Activated CD4-positive, alpha-beta T cell treated with anti-CD3 and anti-CD28 coated beads, Interleukin-2, amount 10 ng/mL, durations not matched to agents 24 days and 14 days (primary cell): ENCODE measurements at regions of chr13 and their contacts with region 1.

Region 1: DNA sequence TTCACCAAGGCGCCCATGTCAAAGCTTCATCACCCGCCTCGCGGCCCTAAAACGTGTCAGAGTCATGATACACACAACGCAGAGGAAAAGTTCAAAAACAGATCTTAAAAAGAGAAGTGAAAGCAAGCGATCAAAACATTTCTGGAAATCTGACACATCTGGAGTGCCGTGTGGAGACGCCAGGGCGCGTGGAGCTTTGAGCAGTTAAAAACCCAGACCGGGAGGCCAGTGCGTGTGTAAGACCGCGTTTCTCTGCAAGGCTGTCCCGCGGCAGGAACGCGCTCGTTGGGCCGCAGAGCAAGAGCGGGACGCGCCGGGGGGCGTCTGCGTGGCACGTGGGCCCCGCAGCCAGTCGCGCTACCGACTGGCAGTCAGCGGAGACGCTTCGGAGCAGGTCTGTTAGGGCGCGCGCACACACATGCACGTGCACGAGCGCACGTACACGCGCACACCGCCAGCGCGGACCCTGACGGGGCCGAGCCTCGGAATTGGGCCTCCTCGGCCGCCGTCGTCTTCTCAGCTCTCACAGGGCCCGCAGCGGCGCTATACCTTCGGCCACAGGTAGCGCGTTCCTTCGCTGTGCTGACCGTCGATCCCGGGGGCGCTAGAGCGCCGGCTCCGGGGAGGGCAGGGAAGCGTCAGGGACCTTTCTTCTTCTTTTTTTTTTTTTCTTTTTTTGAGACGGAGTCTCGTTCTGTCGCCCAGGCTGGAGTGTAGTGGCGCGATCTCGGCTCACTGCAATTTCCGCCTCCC is 35.8 kb downstream of the RNF6 start:
- DNase-seq: peak; percentile 97
- H3K4me3 Mint-ChIP-seq: peak overlapping the region; percentile 88
- H3K27ac Mint-ChIP-seq: peak overlapping the region; percentile 97
- H3K4me1 Mint-ChIP-seq: peaks cover 23% of the 10 kb centered on the region
- H3K27me3 Mint-ChIP-seq: no peaks in the 10 kb centered on the region

Region 2: DNA sequence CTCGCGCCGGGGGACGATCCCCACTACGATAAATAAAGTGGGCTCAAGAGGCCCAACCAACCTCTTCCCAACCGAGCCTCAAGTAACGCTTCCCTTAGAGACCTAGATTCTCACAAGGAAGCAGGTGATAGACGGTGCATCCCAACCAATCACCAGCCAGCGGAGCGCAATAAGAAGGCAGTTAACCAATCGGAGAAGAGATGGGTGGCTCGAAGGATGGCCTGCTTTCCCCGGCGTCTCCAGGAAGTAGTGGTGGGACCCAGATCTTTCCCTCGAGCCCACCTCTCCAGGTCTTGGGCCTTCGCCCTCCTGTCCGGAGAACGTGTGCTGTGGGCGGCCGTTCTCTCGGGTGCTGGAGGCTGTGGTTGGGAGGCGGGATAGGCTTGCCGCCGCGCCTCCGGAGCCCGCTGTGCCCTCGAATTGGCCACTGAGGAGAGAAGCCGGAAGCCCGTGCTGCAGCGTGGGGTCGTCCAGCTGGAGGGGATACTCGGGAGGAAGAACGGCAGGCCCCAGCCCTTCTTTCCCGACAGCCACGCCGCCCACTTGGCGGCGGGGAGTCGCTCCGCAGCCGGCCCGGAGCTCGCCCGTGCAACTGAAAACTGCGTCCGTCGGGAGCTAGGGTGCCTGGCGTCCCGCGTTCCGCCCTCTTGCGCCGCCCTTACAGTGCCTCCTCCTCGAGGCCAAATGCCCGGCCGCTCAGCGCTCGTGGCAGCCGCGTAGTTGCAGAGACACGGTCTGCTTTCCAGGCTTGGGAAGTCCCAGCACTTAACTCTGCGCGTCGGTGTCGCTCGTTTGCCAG is 35.6 kb after region 1 on chr13 and contains the start of gene RNF6:
- intact Hi-C with region 1: loop called (anchors 1 kb)
- DNase-seq: peak; percentile 95
- H3K4me3 Mint-ChIP-seq: peak within 1 kb of the TSS; percentile 97
- H3K27ac Mint-ChIP-seq: peak within 1 kb of the TSS; percentile 99
- H3K4me1 Mint-ChIP-seq: peaks cover 33% of the 10 kb centered on the region
- H3K27me3 Mint-ChIP-seq: peaks cover 2% of the 10 kb centered on the region
- total RNA-seq, gene RNF6: 45.8 and 53.4 TPM in 2 replicates

Region 3: GRCh38 chr13:26253787-26254582 is 67.7 kb after region 1 on chr13 and contains the start of gene CDK8:
- intact Hi-C with region 1: loop called (anchors 1 kb)
- DNase-seq: peak; percentile 96
- H3K4me3 Mint-ChIP-seq: peak within 1 kb of the TSS; percentile 85
- H3K27ac Mint-ChIP-seq: peak within 1 kb of the TSS; percentile 83
- H3K4me1 Mint-ChIP-seq: peaks cover 23% of the 10 kb centered on the region
- H3K27me3 Mint-ChIP-seq: no peaks in the 10 kb centered on the region
- total RNA-seq, gene CDK8: 18.6 and 20.0 TPM in 2 replicates

Region 4: DNA sequence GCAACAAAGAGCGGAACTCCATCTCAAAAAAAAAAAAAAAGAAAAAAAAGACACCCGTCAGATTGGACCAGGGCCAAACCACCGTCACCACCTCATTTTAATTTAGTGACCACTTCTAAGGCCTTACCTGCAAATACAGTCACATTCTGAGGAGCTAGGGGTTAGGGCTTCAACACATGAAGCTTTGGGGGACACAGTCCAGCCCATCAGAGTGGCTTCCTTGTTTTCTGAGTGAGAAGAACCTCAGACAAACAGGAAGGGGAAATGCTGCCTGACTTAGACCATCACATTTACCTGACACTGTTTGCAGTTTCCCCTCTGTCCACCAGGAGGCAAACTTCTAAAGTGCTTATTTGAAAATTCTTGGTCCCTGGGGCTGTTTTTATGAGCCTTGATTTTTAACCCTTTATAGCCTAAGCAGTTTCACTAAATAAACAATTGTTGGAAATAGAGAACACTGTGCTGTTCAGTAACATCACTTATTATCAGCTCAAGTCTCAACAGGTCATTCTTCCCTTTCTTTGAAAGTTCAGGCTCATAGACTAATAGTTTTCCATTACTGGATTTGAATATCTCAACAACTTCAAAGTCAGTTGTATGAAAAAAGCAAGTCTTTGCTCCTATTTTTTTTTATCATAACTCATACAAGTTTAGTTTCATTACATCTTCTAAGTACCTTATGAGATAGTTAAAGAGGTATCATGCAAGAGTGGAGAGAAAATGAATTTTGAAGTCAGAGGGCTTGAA is 296.3 kb after region 1 on chr13:
- intact Hi-C with region 1: loop called (anchors 1 kb)
- DNase-seq: peak; percentile 89
- H3K4me3 Mint-ChIP-seq: no peak overlapping the region
- H3K27ac Mint-ChIP-seq: peak overlapping the region; percentile 21
- H3K4me1 Mint-ChIP-seq: peaks cover 4% of the 10 kb centered on the region
- H3K27me3 Mint-ChIP-seq: no peaks in the 10 kb centered on the region

Region 5: GRCh38 chr13:26495750-26496149 is 309.5 kb after region 1 on chr13:
- intact Hi-C with region 1: loop called (anchors 1 kb)
- DNase-seq: no peak
- H3K4me3 Mint-ChIP-seq: no peak overlapping the region
- H3K27ac Mint-ChIP-seq: no peak overlapping the region
- H3K4me1 Mint-ChIP-seq: peaks cover 1% of the 10 kb centered on the region
- H3K27me3 Mint-ChIP-seq: peaks cover 1% of the 10 kb centered on the region

Region 6: DNA sequence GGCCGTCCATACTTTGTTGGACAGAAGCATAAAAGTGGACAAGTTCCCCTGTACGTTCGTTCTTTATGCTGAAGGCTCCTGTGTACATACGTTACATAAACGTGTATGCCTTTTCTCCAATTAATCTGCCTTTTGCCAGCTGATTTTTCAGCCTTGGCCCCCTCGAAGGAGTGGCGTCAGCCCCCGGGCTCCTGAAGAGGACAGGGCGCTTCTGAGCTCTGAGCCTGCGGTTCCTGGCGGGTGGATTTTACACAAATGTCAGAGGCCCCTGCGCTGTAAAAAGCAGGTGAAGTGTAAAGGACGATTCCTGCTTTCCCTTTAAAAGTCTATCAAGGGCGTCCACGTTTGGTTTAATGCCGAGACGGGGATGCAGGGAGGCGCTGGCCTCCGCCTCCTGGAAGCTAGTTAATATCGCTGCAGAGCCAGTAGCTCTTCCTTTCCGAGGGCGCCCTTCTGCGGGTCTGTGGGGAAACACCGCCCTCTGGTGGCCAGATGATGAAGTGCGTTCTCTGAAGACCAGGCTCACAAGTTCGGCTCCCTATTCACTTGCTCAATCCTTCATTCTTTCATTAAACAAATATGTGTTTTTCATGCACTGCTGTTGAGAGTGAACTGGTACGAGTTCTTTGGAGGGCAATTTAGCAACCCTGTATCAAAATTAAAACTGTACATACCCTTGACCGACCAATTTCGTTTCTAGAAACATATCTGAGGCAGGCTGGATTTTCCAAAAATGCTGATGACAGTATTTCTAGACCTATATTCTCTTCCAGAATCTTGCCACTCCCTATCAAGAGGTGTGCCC is 512.3 kb after region 1 on chr13:
- intact Hi-C with region 1: loop called (anchors 1 kb)
- DNase-seq: peak; percentile 94
- H3K4me3 Mint-ChIP-seq: no peak overlapping the region
- H3K27ac Mint-ChIP-seq: no peak overlapping the region
- H3K4me1 Mint-ChIP-seq: no peaks in the 10 kb centered on the region
- H3K27me3 Mint-ChIP-seq: peaks cover 2% of the 10 kb centered on the region

Region 7: GRCh38 chr13:26760835-26761582 is 574.7 kb after region 1 on chr13:
- intact Hi-C with region 1: no loop called
- DNase-seq: no peak
- H3K4me3 Mint-ChIP-seq: no peak overlapping the region
- H3K27ac Mint-ChIP-seq: no peak overlapping the region
- H3K4me1 Mint-ChIP-seq: no peaks in the 10 kb centered on the region
- H3K27me3 Mint-ChIP-seq: peaks cover 51% of the 10 kb centered on the region